ENCODE measurements at regions of chr2 and their contacts with region 1.

Region 1: DNA sequence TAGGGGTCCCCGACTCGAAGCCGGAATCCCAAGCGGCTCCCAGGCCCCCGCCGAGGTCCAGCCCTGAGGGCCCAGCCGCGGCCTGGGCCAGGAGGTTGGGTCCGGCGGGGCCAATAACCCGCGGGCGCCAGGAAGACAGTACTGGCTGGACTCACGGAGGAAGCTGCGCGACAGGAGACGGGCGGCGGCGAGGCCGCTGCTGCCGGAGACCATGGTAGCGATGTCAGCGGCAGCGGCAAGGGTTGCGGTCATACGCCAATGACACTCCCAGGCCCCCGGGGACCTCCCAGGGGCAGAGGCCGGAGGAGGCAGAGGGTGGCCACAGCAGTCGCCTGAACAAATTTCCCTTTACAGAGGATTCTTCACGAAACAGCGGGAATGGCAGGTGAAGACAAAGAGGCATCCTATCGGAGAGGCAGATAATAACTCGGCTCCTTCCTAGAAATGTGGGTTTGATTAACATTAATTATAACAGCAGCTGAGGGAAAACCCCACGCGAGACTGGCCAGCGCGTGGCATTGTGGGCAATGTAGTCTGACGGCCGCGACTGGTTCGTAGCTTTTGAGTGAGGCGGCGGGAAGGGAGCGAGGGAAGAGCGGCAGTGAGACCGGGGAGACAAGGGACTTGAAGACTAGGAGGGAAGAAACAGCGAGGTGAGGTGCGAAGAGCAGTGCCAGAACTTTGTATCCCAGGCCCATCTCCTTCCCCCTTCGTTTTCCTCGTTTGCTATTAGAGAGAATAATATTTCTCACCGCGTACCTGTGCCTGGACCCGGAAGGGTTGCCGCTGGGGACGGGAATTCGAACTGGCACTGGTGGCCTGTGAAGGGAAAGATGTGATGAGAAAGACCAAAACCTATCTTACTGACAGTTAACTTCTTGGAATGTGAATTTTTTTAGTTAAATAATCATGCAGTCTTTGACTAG is at the start of gene SUCLG1:
- DNase-seq: peak; percentile 89
- H3K4me3 Mint-ChIP-seq: peak within 1 kb of the TSS; percentile 86
- H3K27ac Mint-ChIP-seq: peak within 1 kb of the TSS; percentile 92
- H3K4me1 Mint-ChIP-seq: peaks cover 40% of the 10 kb centered on the region
- H3K27me3 Mint-ChIP-seq: no peaks in the 10 kb centered on the region
- total RNA-seq, gene SUCLG1: 75.3 to 80.7 TPM

Region 2: GRCh38 chr2:84231478-84231877 is 227.8 kb before region 1 on chr2:
- CTCF ChIA-PET with region 1: no interaction called
- intact Hi-C with region 1: no loop called
- DNase-seq: no peak
- H3K4me3 Mint-ChIP-seq: no peak overlapping the region
- H3K27ac Mint-ChIP-seq: no peak overlapping the region
- H3K4me1 Mint-ChIP-seq: no peaks in the 10 kb centered on the region
- H3K27me3 Mint-ChIP-seq: peaks cover 8% of the 10 kb centered on the region

Region 3: GRCh38 chr2:84481702-84482101 is 22.4 kb after region 1 on chr2:
- CTCF ChIA-PET with region 1: interaction called, 3 read pairs
- intact Hi-C with region 1: loop called (anchors 1 kb)
- DNase-seq: peak; percentile 57
- H3K4me3 Mint-ChIP-seq: no peak overlapping the region
- H3K27ac Mint-ChIP-seq: peak overlapping the region; percentile 35
- H3K4me1 Mint-ChIP-seq: peaks cover 17% of the 10 kb centered on the region
- H3K27me3 Mint-ChIP-seq: no peaks in the 10 kb centered on the region

Region 4: GRCh38 chr2:84516234-84516986 is 57.1 kb after region 1 on chr2 and contains the start of gene DNAH6:
- CTCF ChIA-PET with region 1: no interaction called
- intact Hi-C with region 1: loop called (anchors 1 kb)
- DNase-seq: peak; percentile 94
- H3K4me3 Mint-ChIP-seq: peak within 1 kb of the TSS; percentile 85
- H3K27ac Mint-ChIP-seq: no peak within 1 kb of the TSS
- H3K4me1 Mint-ChIP-seq: peaks cover 22% of the 10 kb centered on the region
- H3K27me3 Mint-ChIP-seq: no peaks in the 10 kb centered on the region
- total RNA-seq, gene DNAH6: 0.07 to 0.62 TPM

Region 5: DNA sequence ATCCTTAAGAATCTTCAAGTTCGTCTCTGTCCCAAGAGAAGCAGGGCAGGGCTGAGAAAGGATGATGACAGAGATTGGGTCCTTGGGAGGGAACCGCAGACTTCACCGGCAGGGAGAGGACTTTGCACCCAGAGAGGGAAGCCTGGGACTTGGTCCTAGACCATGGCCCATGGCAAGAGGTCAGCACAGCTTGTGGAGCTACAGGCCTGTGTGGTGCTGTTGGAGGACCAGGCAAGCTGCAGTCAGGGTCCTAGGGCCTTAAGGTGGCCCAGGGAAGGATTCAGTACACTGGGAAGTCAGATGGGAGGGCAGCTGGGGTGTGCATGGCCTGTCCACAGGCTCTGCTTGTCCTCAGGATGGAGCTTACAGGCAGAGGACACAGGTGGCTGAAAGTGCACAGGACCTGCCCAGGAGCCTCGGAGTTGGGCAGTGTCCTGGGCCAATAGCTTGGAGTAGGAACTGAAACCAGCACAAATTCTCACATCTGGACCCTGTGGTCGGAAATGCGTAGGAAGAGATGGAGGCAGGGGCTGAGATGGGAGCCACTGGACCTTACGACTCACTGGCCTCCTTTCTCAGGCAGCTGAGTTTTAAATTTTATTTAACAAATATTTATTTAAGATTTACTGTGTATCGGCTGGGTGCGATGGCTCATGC is 617.5 kb after region 1 on chr2:
- CTCF ChIA-PET with region 1: no interaction called
- intact Hi-C with region 1: no loop called
- DNase-seq: no peak
- H3K4me3 Mint-ChIP-seq: no peak overlapping the region
- H3K27ac Mint-ChIP-seq: no peak overlapping the region
- H3K4me1 Mint-ChIP-seq: no peaks in the 10 kb centered on the region
- H3K27me3 Mint-ChIP-seq: peaks cover 11% of the 10 kb centered on the region